ENCODE measurements at regions of chr15 and their contacts with region 1.

Region 1: DNA sequence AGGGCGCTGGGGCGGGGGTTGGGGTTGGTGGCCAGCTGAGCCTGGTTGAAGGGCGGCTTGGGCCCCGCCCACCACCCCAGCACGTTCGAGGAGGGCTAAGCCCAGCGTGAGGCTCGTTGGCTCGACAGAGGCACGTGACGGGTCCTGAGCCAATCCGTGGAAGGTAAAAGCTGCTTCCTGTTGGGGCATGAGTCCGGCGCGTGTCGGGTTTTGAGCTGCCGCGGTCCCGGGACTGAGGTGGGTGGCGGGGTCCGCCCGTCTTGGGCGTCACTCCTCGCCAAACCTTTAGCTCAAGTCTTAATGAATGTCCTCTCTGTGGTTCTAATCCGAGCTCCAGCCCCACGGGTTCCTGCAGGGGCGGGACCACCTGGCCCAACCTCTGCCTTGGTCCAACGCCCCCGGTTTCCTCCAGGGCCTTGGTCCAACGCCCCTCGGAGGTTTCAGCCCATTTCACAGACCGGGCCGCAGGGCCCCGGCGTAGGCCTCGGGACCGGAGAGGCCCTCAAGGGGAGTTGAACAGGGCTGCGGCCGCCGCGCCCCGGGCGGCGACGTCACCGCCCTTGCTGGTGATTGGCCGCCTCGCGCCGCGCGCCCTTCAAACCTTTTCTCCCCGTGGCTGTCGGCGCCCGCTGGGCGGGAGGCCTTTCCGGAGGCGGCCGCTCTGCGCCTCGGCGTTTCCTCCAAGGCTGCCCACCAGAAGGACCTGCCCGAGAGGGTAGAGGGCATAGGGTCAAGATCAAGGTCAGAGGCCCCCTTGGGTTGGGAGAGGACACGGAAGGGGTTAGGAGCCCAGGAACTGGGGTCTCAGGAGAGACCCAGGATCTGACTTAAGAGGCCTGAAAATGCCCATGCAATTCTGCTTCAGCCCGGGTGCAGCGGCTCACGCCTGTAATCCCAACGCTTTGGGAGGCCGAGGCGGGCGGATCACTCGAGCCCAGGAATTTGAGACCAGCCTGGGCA is at the start of gene RCCD1:
- DNase-seq: peak; percentile 93
- ATAC-seq: peak; percentile 88
- H3K4me3 ChIP-seq: peak within 1 kb of the TSS; percentile 69
- H3K27ac ChIP-seq: peak within 1 kb of the TSS; percentile 54
- H3K4me1 ChIP-seq: peaks cover 6% of the 10 kb centered on the region
- H3K27me3 ChIP-seq: no peaks in the 10 kb centered on the region
- CTCF ChIP-seq: no peak
- POLR2A ChIP-seq: peak; percentile 79
- RAD21 ChIP-seq: no peak
- total RNA-seq, gene RCCD1: 3.9 and 4.4 TPM in 2 replicates

Region 2: GRCh38 chr15:90994417-90995311 is 39.7 kb after region 1 on chr15 and contains the start of gene PRC1:
- CTCF ChIA-PET with region 1: interaction called, 4 read pairs
- POLR2A ChIA-PET with region 1: no interaction called
- dilution Hi-C with region 1: no loop called
- in situ Hi-C with region 1: no loop called
- intact Hi-C with region 1: loop called (anchors 2 kb)
- DNase-seq: peak; percentile 97
- ATAC-seq: peak; percentile 98
- H3K4me3 ChIP-seq: peak within 1 kb of the TSS; percentile 96
- H3K27ac ChIP-seq: peak within 1 kb of the TSS; percentile 72
- H3K4me1 ChIP-seq: no peaks in the 10 kb centered on the region
- H3K27me3 ChIP-seq: no peaks in the 10 kb centered on the region
- CTCF ChIP-seq: no peak
- POLR2A ChIP-seq: peak; percentile 83
- RAD21 ChIP-seq: no peak
- total RNA-seq, gene PRC1: 148 and 208 TPM in 2 replicates

Region 3: GRCh38 chr15:91049378-91050127 is 94.6 kb after region 1 on chr15:
- CTCF ChIA-PET with region 1: interaction called, 9 read pairs
- POLR2A ChIA-PET with region 1: no interaction called
- dilution Hi-C with region 1: no loop called
- in situ Hi-C with region 1: no loop called
- intact Hi-C with region 1: loop called (anchors 1 kb)
- DNase-seq: peak; percentile 53
- ATAC-seq: peak; percentile 99
- H3K4me3 ChIP-seq: no peak overlapping the region
- H3K27ac ChIP-seq: no peak overlapping the region
- H3K4me1 ChIP-seq: no peaks in the 10 kb centered on the region
- H3K27me3 ChIP-seq: peaks cover 4% of the 10 kb centered on the region
- CTCF ChIP-seq: peak; percentile 58
- POLR2A ChIP-seq: no peak
- RAD21 ChIP-seq: peak; percentile 67

Region 4: GRCh38 chr15:91224755-91225380 is 269.9 kb after region 1 on chr15:
- CTCF ChIA-PET with region 1: no interaction called
- POLR2A ChIA-PET with region 1: no interaction called
- dilution Hi-C with region 1: no loop called
- in situ Hi-C with region 1: no loop called
- intact Hi-C with region 1: loop called (anchors 2 kb)
- DNase-seq: peak; percentile 41
- ATAC-seq: peak; percentile 57
- H3K4me3 ChIP-seq: no peak overlapping the region
- H3K27ac ChIP-seq: no peak overlapping the region
- H3K4me1 ChIP-seq: no peaks in the 10 kb centered on the region
- H3K27me3 ChIP-seq: no peaks in the 10 kb centered on the region; the same call in 1 of the 2 replicates
- CTCF ChIP-seq: peak; percentile 58
- POLR2A ChIP-seq: no peak
- RAD21 ChIP-seq: peak; percentile 55

Region 5: DNA sequence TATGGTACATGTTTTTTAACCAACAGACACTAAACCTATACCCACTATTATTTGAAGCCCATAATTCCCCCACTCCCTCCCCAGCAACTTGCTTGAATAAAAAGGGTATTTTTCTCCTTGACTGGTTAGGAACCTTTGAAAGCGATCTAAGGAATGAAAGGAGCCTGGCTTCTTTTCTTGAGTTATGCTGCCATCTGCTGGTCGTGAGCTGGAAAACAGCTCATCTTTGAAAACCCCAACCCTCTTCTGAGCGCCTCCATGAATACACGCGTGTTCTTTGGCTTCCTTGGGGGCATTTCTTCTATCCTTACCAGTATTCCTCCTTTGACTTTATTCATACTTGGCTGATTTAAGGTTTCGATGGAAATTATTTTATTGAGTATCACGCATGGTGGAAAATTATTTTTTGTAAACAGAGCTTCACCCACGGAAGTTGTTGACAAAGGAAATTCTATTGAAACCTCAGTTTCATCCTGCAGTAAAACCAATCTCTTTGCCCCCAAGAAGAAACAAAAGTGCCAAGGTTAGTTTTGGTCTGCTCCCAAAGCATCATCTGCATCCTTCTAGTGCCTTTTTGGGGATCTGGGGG is 316.7 kb after region 1 on chr15:
- CTCF ChIA-PET with region 1: interaction called, 10 read pairs
- POLR2A ChIA-PET with region 1: no interaction called
- dilution Hi-C with region 1: no loop called
- in situ Hi-C with region 1: loop called (anchors 10 kb)
- intact Hi-C with region 1: loop called (anchors 1 kb)
- DNase-seq: peak; percentile 65
- ATAC-seq: peak; percentile 95
- H3K4me3 ChIP-seq: no peak overlapping the region
- H3K27ac ChIP-seq: no peak overlapping the region
- H3K4me1 ChIP-seq: no peaks in the 10 kb centered on the region
- H3K27me3 ChIP-seq: peaks cover 7% of the 10 kb centered on the region
- CTCF ChIP-seq: peak; percentile 85
- POLR2A ChIP-seq: no peak
- RAD21 ChIP-seq: peak; percentile 87